ENCODE measurements at regions of chr15 and their contacts with region 1.

Region 1: GRCh38 chr15:63860155-63860554 is 26.4 kb upstream of the HERC1 start:
- DNase-seq: peak; percentile 36 to 81 (median 60)
- ATAC-seq: peak; percentile 96
- H3K4me3 ChIP-seq: no peak overlapping the region
- H3K4me3 Mint-ChIP-seq: peak overlapping the region; percentile 54
- H3K27ac ChIP-seq: peak overlapping the region; percentile 39 to 62
- H3K27ac Mint-ChIP-seq: peak overlapping the region; percentile 94
- H3K4me1 ChIP-seq: peaks cover 34% of the 10 kb centered on the region
- H3K4me1 Mint-ChIP-seq: peaks cover 50% of the 10 kb centered on the region
- H3K27me3 ChIP-seq: no peaks in the 10 kb centered on the region
- H3K27me3 Mint-ChIP-seq: no peaks in the 10 kb centered on the region
- CTCF ChIP-seq: no peak

Region 2: DNA sequence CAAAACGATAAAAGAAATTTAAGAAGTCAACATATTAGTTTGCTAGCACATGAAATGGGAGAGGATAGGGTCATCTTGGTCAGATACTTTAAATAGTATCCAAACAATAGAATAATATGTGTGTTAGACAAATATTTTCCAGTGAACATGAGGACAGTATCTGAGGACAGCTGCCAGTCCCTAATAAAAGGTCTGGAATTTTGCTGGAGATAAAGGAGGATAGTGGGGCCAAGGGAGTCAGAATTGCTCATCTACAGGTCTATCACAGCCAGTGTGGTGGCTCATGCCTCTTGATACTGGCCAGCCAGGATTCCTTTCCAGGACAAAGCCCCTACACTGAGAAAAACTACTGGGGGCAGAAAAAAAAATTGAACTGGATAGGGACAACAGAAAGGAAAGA is 100.4 kb before region 1 on chr15:
- CTCF ChIA-PET with region 1: no interaction called
- POLR2A ChIA-PET with region 1: no interaction called
- intact Hi-C with region 1: no loop called
- DNase-seq: no peak
- ATAC-seq: no peak
- H3K4me3 ChIP-seq: no peak overlapping the region
- H3K4me3 Mint-ChIP-seq: no peak overlapping the region
- H3K27ac ChIP-seq: no peak overlapping the region
- H3K27ac Mint-ChIP-seq: peak overlapping the region; percentile 35
- H3K4me1 ChIP-seq: peaks cover 22% of the 10 kb centered on the region
- H3K4me1 Mint-ChIP-seq: peaks cover 36% of the 10 kb centered on the region
- H3K27me3 ChIP-seq: no peaks in the 10 kb centered on the region
- H3K27me3 Mint-ChIP-seq: no peaks in the 10 kb centered on the region
- CTCF ChIP-seq: no peak

Region 3: GRCh38 chr15:63833021-63833696 is 27.0 kb before region 1 on chr15:
- CTCF ChIA-PET with region 1: interaction called, 3 read pairs
- POLR2A ChIA-PET with region 1: interaction called, 8 read pairs
- intact Hi-C with region 1: loop called in 1 of 2 experiments (anchors 2 kb)
- DNase-seq: peak in 7 of 9 experiments; percentile 10 to 59 (median 28)
- ATAC-seq: peak; percentile 34
- H3K4me3 ChIP-seq: peak overlapping the region; percentile 93 to 99
- H3K4me3 Mint-ChIP-seq: peak overlapping the region; percentile 98
- H3K27ac ChIP-seq: peak overlapping the region; percentile 92 to 98
- H3K27ac Mint-ChIP-seq: peak overlapping the region; percentile 94
- H3K4me1 ChIP-seq: peaks cover 40% of the 10 kb centered on the region
- H3K4me1 Mint-ChIP-seq: peaks cover 56% of the 10 kb centered on the region
- H3K27me3 ChIP-seq: no peaks in the 10 kb centered on the region
- H3K27me3 Mint-ChIP-seq: no peaks in the 10 kb centered on the region
- CTCF ChIP-seq: no peak

Region 4: GRCh38 chr15:63849215-63849551 is 11.0 kb before region 1 on chr15:
- CTCF ChIA-PET with region 1: interaction called, 3 read pairs
- POLR2A ChIA-PET with region 1: interaction called, 16 read pairs
- intact Hi-C with region 1: no loop called
- DNase-seq: peak in 1 of 9 experiments; percentile 26
- ATAC-seq: no peak
- H3K4me3 ChIP-seq: no peak overlapping the region
- H3K4me3 Mint-ChIP-seq: no peak overlapping the region
- H3K27ac ChIP-seq: no peak overlapping the region
- H3K27ac Mint-ChIP-seq: peak overlapping the region; percentile 5
- H3K4me1 ChIP-seq: peaks cover 10% of the 10 kb centered on the region
- H3K4me1 Mint-ChIP-seq: peaks cover 13% of the 10 kb centered on the region
- H3K27me3 ChIP-seq: no peaks in the 10 kb centered on the region
- H3K27me3 Mint-ChIP-seq: no peaks in the 10 kb centered on the region
- CTCF ChIP-seq: no peak

Region 5: DNA sequence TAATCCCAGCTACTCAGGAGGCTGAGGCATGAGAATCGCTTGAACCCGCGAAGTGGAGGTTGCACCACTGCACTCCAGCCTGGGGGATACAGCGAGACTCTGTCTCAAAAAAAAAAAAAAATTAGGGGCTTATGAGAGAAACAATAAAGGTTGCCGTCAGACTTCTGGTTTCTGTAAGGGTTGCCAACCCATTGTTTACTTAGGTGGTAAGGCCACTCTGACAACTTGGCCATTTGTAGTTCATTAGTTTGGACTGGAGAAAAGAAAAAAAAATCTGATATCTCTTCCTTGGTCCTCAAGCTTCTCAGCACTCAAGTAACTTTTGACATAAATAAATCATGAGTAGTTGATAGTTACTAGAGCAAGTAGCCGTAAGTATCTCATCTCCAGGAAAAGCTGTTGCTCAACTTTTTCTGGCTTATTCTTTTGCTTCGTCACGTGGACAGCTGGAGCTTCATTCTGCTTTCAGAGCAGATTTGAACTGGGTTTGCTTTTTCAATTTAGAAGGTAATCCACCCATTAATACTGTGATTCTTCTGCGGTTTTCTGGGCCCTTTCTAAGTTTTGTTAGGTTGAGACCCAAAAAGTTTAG is 245.1 kb after region 1 on chr15:
- CTCF ChIA-PET with region 1: no interaction called
- POLR2A ChIA-PET with region 1: no interaction called
- intact Hi-C with region 1: no loop called
- DNase-seq: no peak
- ATAC-seq: no peak
- H3K4me3 ChIP-seq: no peak overlapping the region
- H3K4me3 Mint-ChIP-seq: no peak overlapping the region
- H3K27ac ChIP-seq: no peak overlapping the region
- H3K27ac Mint-ChIP-seq: no peak overlapping the region
- H3K4me1 ChIP-seq: peaks cover 13% of the 10 kb centered on the region
- H3K4me1 Mint-ChIP-seq: peaks cover 52% of the 10 kb centered on the region
- H3K27me3 ChIP-seq: no peaks in the 10 kb centered on the region
- H3K27me3 Mint-ChIP-seq: no peaks in the 10 kb centered on the region
- CTCF ChIP-seq: no peak

Measured in CD8-positive, alpha-beta T cell (primary cell).